CD8-positive, alpha-beta T cell (primary cell): ENCODE measurements at regions of chr11 and their contacts with region 1.

Region 1: DNA sequence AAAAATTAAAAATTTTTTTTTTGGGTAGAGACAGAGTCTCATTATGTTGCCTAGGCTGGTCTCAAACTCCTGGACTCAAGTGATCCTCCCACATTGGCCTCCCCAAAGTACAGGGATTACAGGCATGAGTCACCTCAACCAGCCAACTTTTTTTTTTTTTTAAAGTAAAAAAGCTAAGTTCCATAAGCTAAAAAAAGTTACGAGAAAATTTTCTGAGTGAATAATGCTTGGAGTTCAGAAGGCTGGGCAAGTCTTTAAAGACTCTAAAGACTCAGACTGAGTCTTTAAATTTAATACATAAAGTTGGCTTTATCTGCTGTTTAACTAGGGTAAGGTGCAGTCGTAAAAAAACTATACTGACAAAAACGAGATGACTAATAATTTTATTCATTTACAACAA is 5.6 kb downstream of the DDX6 start:
- DNase-seq: peak in 2 of 9 experiments; percentile 20 to 40
- ATAC-seq: no peak
- H3K4me3 ChIP-seq: no peak overlapping the region
- H3K4me3 Mint-ChIP-seq: peak overlapping the region; percentile 37
- H3K27ac ChIP-seq: peak overlapping the region in 1 of 2 experiments; percentile 23
- H3K27ac Mint-ChIP-seq: peak overlapping the region; percentile 45
- H3K4me1 ChIP-seq: peaks cover 72% of the 10 kb centered on the region
- H3K4me1 Mint-ChIP-seq: peaks cover 70% of the 10 kb centered on the region
- H3K27me3 ChIP-seq: no peaks in the 10 kb centered on the region
- H3K27me3 Mint-ChIP-seq: no peaks in the 10 kb centered on the region
- CTCF ChIP-seq: no peak

Region 2: GRCh38 chr11:118771547-118772288 is 13.6 kb before region 1 on chr11:
- CTCF ChIA-PET with region 1: interaction called, 34 read pairs
- POLR2A ChIA-PET with region 1: interaction called, 6 read pairs
- intact Hi-C with region 1: loop called in 1 of 2 experiments (anchors 2 kb)
- DNase-seq: no peak
- ATAC-seq: no peak
- H3K4me3 ChIP-seq: no peak overlapping the region
- H3K4me3 Mint-ChIP-seq: peak overlapping the region; percentile 63
- H3K27ac ChIP-seq: peak overlapping the region in 1 of 2 experiments; percentile 0
- H3K27ac Mint-ChIP-seq: peak overlapping the region; percentile 71
- H3K4me1 ChIP-seq: peaks cover 78% of the 10 kb centered on the region
- H3K4me1 Mint-ChIP-seq: peaks cover 89% of the 10 kb centered on the region
- H3K27me3 ChIP-seq: no peaks in the 10 kb centered on the region
- H3K27me3 Mint-ChIP-seq: no peaks in the 10 kb centered on the region
- CTCF ChIP-seq: no peak